ENCODE measurements at regions of chr7 and their contacts with region 1.

Region 1: GRCh38 chr7:112898432-112899290 is 108.5 kb upstream of the TMEM168 start:
- DNase-seq: no peak
- H3K4me3 ChIP-seq: no peak overlapping the region
- H3K27me3 ChIP-seq: no peaks in the 10 kb centered on the region
- CTCF ChIP-seq: peak; percentile 77

Region 2: GRCh38 chr7:112550468-112551060 is 348.1 kb before region 1 on chr7:
- CTCF ChIA-PET with region 1: interaction called, 12 read pairs
- POLR2A ChIA-PET with region 1: no interaction called
- DNase-seq: no peak
- H3K4me3 ChIP-seq: no peak overlapping the region
- H3K27me3 ChIP-seq: no peaks in the 10 kb centered on the region
- CTCF ChIP-seq: peak; percentile 94

Measured in BJ (cell line).